OCI-LY7 (cell line): ENCODE measurements at regions of chr15 and their contacts with region 1.

Region 1: GRCh38 chr15:64430000-64430735 is 30.2 kb upstream of the ZNF609 start:
- DNase-seq: no peak
- H3K4me3 ChIP-seq: no peak overlapping the region
- H3K27ac ChIP-seq: no peak overlapping the region
- H3K4me1 ChIP-seq: no peaks in the 10 kb centered on the region
- CTCF ChIP-seq: no peak

Region 2: GRCh38 chr15:64093627-64094417 is 336.3 kb before region 1 on chr15 and contains the start of gene CIAO2A:
- CTCF ChIA-PET with region 1: no interaction called
- POLR2A ChIA-PET with region 1: no interaction called
- intact Hi-C with region 1: no loop called
- DNase-seq: peak; percentile 98
- H3K4me3 ChIP-seq: peak within 1 kb of the TSS; percentile 85
- H3K27ac ChIP-seq: peak within 1 kb of the TSS; percentile 75
- H3K4me1 ChIP-seq: peaks cover 68% of the 10 kb centered on the region
- CTCF ChIP-seq: no peak
- total RNA-seq, gene CIAO2A: 71.6 and 84.7 TPM in 2 replicates

Region 3: GRCh38 chr15:64542091-64542490 is 111.9 kb after region 1 on chr15:
- CTCF ChIA-PET with region 1: no interaction called
- POLR2A ChIA-PET with region 1: no interaction called
- intact Hi-C with region 1: no loop called
- DNase-seq: no peak
- H3K4me3 ChIP-seq: no peak overlapping the region
- H3K27ac ChIP-seq: no peak overlapping the region
- H3K4me1 ChIP-seq: no peaks in the 10 kb centered on the region
- CTCF ChIP-seq: no peak

Region 4: DNA sequence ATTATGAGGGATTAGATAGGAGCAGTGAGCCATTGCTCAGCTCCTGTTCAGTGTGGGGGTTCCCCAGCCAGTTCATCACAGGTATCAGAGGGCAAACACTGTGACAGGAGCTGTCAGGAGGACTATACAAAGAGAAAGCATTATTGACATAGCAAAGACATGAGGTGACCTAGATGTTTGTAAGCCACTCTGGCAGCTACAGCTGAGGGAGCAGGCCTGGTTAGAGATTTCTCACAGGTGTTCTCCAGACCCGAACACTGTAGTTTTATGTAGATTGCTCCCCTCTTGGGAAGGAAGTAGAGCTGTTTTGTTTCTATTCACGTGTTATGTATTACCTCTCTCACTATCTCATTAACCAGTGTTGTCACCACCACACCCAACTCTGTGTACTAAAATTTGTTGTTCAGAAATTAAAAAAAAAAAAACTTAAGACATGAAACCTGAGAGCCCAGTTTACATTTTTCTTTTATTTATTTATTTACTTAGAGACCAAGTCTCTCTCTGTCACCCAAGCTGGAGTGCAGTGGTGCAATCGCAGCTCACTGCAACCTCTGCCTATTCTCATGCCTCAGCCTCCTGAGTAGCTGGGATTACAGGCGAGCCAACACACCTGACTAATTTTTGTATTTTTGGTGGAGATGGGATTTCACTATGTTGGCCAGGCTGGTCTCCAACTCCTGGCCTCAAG is 221.5 kb after region 1 on chr15:
- CTCF ChIA-PET with region 1: no interaction called
- POLR2A ChIA-PET with region 1: no interaction called
- intact Hi-C with region 1: loop called (anchors 5 kb)
- DNase-seq: peak; percentile 60
- H3K4me3 ChIP-seq: no peak overlapping the region
- H3K27ac ChIP-seq: no peak overlapping the region
- H3K4me1 ChIP-seq: peaks cover 17% of the 10 kb centered on the region
- CTCF ChIP-seq: no peak

Region 5: DNA sequence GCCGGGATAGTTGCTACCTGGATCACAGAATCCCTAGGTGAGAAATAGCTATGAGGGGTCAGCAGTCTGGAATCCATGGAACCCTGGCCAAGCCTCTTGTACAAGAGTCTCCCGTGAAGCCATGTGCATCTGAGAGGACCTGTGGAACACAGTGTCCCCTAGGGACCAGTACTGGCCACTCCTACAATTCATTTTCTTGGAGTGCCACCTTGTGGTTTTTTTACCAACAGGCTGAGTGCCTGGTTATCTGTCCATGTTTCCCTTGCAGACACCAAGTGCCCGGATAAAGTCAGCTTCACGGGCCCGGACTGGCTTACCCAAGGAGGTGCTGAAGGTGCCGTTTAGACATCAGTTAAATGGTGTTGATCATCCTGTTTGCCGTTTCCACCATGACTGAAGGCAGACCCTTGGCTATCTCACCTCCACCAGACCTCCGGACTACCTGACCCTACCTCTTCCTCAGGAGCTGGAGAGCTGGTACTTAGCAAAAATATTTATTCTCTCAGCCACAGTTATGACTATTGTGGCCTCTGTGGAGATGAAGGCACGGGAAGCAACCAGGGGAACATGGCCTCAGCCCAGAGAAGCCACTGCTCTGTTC is 251.4 kb after region 1 on chr15:
- CTCF ChIA-PET with region 1: interaction called, 3 read pairs
- POLR2A ChIA-PET with region 1: no interaction called
- intact Hi-C with region 1: loop called (anchors 2 kb)
- DNase-seq: peak; percentile 44
- H3K4me3 ChIP-seq: no peak overlapping the region
- H3K27ac ChIP-seq: no peak overlapping the region
- H3K4me1 ChIP-seq: no peaks in the 10 kb centered on the region
- CTCF ChIP-seq: peak; percentile 72